Aorta (tissue), 5 donors: ENCODE measurements at regions of chr19 and their contacts with region 1.

Region 1: GRCh38 chr19:15555759-15556633 is 47.7 kb downstream of the CYP4F22 start:
- DNase-seq: peak; percentile 94 to 98
- ATAC-seq: peak; percentile 93
- H3K4me3 ChIP-seq: peak overlapping the region in 1 of 2 donors; percentile 50
- H3K27ac ChIP-seq: peak overlapping the region in 1 of 2 donors; percentile 73
- H3K4me1 ChIP-seq: no peaks in the 10 kb centered on the region
- H3K27me3 ChIP-seq: no peaks in the 10 kb centered on the region

Region 2: GRCh38 chr19:15177269-15178116 is 378.5 kb before region 1 on chr19:
- intact Hi-C with region 1: loop called (anchors 2 to 5 kb)
- DNase-seq: peak; percentile 89 to 95
- ATAC-seq: peak; percentile 94
- H3K4me3 ChIP-seq: no peak overlapping the region
- H3K27ac ChIP-seq: peak overlapping the region in 1 of 2 donors; percentile 11
- H3K4me1 ChIP-seq: no peaks in the 10 kb centered on the region
- H3K27me3 ChIP-seq: no peaks in the 10 kb centered on the region

Region 3: DNA sequence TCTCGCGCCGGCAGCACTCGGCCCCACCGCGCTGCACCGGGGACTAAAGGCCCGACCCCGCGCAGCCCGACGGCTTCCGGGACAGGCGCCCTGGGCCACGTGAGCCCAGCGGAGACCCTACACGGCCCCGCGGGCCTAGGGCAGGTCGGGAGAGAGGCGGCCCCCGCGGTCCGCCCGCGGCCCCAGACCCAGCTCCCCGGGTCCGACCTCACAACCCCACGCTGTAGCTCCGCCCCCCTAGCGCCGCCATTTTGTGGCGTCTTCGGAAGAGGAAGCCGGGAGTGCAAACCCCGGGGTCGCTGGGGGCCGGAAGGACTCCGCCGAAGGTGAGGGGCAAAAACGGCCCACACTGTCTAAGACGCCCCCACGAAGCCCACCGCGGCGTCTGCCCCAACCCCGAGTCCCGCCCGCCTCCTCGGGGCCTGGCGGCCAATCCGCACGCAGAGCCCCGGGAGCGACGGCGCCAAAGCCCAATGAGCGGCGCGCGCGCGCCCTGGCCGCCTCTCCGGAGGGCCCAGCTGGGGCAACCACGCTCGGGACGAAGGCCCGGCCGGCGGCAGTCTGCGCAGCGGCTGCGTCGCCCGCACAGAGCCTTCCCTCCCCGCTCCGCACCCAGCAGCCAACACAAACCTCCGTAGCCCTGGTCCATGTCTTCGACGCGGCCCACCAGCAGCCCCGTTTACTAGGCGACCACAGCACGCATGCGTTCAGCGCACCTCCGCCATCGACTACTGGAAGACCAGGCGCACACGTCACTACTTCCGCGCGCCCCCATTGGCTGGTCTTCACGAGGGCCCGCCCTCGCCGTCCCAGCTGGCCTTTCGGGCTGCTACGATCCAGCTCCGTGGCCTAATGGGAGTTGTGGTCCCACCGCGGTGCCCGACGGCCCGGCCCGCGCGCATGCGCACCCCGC is 176.7 kb before region 1 on chr19 and contains the start of gene AKAP8:
- intact Hi-C with region 1: loop called in 1 of 2 experiments (anchors 2 kb)
- DNase-seq: peak; percentile 99
- ATAC-seq: peak; percentile 98
- H3K4me3 ChIP-seq: peak within 1 kb of the TSS; percentile 78 to 82
- H3K27ac ChIP-seq: peak within 1 kb of the TSS; percentile 71 to 87
- H3K4me1 ChIP-seq: no peaks in the 10 kb centered on the region
- H3K27me3 ChIP-seq: no peaks in the 10 kb centered on the region
- total RNA-seq, gene AKAP8: 35.3 to 48.1 TPM

Region 4: GRCh38 chr19:15449620-15450527 is 106.1 kb before region 1 on chr19 and contains the start of gene WIZ:
- intact Hi-C with region 1: loop called in 1 of 2 experiments (anchors 5 kb)
- DNase-seq: peak; percentile 92 to 95
- ATAC-seq: peak; percentile 36
- H3K4me3 ChIP-seq: peak within 1 kb of the TSS; percentile 51 to 66
- H3K27ac ChIP-seq: peak within 1 kb of the TSS in 1 of 2 donors; percentile 78
- H3K4me1 ChIP-seq: peaks cover 0 to 1% of the 10 kb centered on the region in 2 donors
- H3K27me3 ChIP-seq: no peaks in the 10 kb centered on the region
- total RNA-seq, gene WIZ: 38.0 to 41.4 TPM

Region 5: DNA sequence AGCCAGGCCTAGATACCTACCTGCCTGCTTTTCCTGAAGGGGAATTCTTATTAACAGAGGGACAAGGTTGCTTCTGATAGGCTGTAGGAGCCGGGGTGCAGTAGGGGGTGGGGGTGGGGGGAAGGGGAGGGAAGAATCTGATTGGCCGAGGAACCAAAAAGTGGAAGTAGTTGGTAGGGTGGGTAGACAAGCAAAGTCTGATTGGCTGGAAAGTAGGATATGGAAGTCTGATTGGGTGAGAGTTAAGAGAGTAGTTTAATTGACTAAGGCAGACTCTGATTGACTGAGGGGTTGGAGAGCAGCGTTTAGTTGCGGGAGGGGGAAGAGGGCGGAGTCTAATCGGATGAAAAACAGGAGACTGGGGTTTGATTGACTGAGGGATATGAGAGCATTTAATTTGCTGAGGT is 57.1 kb before region 1 on chr19:
- intact Hi-C with region 1: no loop called
- DNase-seq: no peak
- ATAC-seq: no peak
- H3K4me3 ChIP-seq: no peak overlapping the region
- H3K27ac ChIP-seq: no peak overlapping the region
- H3K4me1 ChIP-seq: no peaks in the 10 kb centered on the region
- H3K27me3 ChIP-seq: no peaks in the 10 kb centered on the region

Region 6: GRCh38 chr19:15575406-15575805 is 19.4 kb after region 1 on chr19:
- intact Hi-C with region 1: no loop called
- DNase-seq: peak in 1 of 2 donors; percentile 41
- ATAC-seq: no peak
- H3K4me3 ChIP-seq: no peak overlapping the region
- H3K27ac ChIP-seq: no peak overlapping the region
- H3K4me1 ChIP-seq: no peaks in the 10 kb centered on the region
- H3K27me3 ChIP-seq: no peaks in the 10 kb centered on the region